Posterior cingulate gyrus (tissue), 11 donors: ENCODE measurements at regions of chr2 and their contacts with region 1.

Region 1: DNA sequence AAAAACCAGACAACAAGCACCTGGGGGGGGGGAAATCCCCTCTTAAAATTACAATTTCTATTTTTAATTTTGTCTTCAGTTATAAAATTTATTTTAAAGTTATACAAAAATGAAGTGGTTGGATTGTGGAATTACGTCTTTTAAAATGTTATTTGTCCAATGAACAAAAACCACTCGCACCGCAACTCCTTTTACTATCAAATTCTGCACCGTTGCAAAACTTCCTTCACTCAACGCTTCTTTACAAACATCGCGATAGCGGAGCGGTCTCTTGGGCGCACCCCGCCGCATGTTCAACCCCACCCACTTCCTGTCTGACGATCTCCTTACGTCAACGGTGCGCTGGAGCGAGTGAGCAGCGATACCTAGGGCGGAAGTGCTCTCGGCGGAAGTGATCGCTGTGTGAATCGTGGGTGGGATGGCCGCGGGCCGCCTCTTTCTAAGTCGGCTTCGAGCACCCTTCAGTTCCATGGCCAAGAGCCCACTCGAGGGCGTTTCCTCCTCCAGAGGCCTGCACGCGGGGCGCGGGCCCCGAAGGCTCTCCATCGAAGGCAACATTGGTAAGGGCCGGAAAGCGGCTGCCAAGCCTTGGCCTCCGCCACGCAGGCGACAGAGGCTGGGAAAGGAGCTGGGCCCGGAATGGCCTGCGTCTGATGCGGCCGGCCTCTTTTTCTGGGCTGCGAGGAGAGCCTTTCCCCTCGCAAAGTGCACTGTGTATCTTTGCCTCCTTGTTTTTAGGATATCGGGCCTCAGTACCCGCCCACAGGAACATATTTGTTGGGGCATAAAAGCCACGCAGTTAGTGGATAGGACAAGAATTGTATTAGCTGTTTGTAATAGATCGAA is at the start of gene DGUOK:
- DNase-seq: peak; percentile 90 to 99 (median 96)

Region 2: GRCh38 chr2:73839652-73840411 is 86.9 kb before region 1 on chr2:
- intact Hi-C with region 1: loop called (anchors 5 kb)
- DNase-seq: no peak

Region 3: GRCh38 chr2:74020702-74021406 is 94.1 kb after region 1 on chr2:
- intact Hi-C with region 1: no loop called
- DNase-seq: peak in 1 of 10 donors; percentile 87

Region 4: GRCh38 chr2:74119912-74120825 is 193.5 kb after region 1 on chr2:
- intact Hi-C with region 1: loop called (anchors 10 kb)
- DNase-seq: peak; percentile 74 to 98 (median 85)